Left ventricle myocardium inferior (tissue), 1 donor: ENCODE measurements at regions of chr2 and their contacts with region 1.

Region 1: GRCh38 chr2:207166039-207166348 is 246 bp upstream of the KLF7 start:
- DNase-seq: peak; percentile 99
- H3K4me3 ChIP-seq: peak overlapping the region; percentile 85
- H3K27ac ChIP-seq: peak overlapping the region; percentile 100
- H3K4me1 ChIP-seq: peaks cover 66% of the 10 kb centered on the region
- H3K27me3 ChIP-seq: no peaks in the 10 kb centered on the region
- CTCF ChIP-seq: no peak

Region 2: DNA sequence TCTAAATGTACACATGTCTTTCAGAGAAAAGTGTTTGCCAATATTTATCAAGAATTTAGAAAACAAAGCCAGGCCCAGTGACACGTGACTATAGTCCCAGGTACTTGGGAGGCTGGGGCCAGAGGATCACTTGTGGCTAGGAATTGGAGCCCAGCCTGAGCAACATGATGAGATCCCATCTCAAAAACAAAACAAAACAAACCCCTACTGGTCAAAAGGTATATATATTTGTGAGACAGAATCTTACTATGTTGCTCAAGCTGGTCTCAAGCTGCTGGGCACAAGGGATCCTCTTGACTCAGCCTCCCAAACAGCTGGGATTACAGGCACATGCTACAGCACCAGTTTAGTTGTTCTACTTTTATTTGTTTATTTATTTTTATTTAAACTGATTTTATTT is 812.3 kb before region 1 on chr2:
- intact Hi-C with region 1: no loop called
- DNase-seq: no peak
- H3K4me3 ChIP-seq: no peak overlapping the region
- H3K27ac ChIP-seq: no peak overlapping the region
- H3K4me1 ChIP-seq: no peaks in the 10 kb centered on the region
- H3K27me3 ChIP-seq: no peaks in the 10 kb centered on the region
- CTCF ChIP-seq: no peak

Region 3: GRCh38 chr2:206597717-206598218 is 568.2 kb before region 1 on chr2:
- intact Hi-C with region 1: no loop called
- DNase-seq: no peak
- H3K4me3 ChIP-seq: no peak overlapping the region
- H3K27ac ChIP-seq: no peak overlapping the region
- H3K4me1 ChIP-seq: no peaks in the 10 kb centered on the region
- H3K27me3 ChIP-seq: no peaks in the 10 kb centered on the region
- CTCF ChIP-seq: no peak

Region 4: GRCh38 chr2:207334624-207335371 is 168.8 kb after region 1 on chr2:
- intact Hi-C with region 1: loop called (anchors 10 kb)
- DNase-seq: peak; percentile 53
- H3K4me3 ChIP-seq: peak overlapping the region; percentile 52
- H3K27ac ChIP-seq: peak overlapping the region; percentile 93
- H3K4me1 ChIP-seq: peaks cover 72% of the 10 kb centered on the region
- H3K27me3 ChIP-seq: no peaks in the 10 kb centered on the region
- CTCF ChIP-seq: no peak